GM10248 (cell line): ENCODE measurements at regions of chr7 and their contacts with region 1.

Region 1: DNA sequence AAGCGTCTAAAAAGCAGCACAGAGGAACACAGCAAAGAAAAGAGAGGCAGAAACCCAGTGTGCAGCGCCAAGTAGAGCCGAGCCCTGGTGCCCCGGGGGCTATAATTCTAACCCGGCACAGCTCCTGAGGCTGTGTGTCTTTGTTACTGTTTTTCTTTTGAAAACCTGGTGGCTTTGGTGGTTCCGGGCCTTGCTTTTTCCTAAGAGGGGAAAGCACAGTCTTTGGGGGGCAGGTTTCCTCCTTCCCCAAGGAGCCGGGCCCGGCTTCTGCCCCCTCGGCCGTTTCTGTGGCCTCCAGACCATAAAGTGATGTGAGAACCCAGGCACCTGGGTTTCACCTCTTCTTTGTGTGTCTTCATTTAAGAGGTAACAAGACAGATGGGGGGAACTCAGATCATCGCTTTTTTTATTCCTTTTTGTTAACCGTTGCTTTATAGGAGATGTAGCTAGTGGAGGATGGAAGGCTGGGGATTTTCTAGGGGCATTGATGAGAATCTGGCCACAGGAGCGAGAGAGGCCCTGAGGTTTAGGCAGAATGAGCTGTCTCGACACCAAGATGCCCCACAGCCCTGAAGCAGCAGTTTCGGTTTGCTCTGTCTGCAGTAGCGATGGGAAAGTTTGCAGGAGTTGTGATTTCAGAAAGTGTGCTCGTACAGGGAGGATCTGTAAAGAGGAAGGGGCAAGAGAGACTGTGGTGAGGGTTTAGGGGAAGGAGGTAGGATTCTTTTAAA is 367.8 kb upstream of the GALNT17 start:
- DNase-seq: peak; percentile 75
- CTCF ChIP-seq: no peak

Region 2: GRCh38 chr7:70520611-70521010 is 243.5 kb before region 1 on chr7:
- CTCF ChIA-PET with region 1: no interaction called
- POLR2A ChIA-PET with region 1: no interaction called
- DNase-seq: no peak
- CTCF ChIP-seq: no peak

Region 3: DNA sequence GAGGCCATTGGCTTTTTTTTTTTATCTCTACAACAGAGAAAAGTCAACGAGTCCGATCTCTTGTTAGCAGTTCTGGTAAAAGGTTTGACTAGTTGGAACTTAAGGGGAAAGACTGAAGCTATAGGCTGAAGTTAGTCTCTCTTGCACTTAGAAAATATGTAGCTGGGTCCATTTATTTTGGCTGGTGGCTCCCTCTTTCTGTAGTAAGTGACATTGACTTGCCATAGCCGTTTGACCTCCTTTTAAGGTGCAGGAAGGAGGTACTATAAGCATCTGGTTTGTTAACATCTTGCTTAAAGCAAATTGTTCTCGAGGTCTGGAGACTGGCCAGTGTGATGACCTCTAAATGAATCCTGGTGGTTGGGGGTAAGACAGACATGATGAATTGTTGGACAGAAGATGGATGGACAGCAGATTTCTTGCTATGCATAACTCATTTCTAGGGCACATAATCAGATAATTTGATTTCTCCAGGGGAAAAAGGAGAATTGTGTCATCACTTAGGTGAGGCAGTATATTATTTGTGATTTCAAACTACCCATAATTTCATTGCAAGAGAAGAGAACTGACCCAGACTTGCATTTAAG is 11.5 kb after region 1 on chr7:
- CTCF ChIA-PET with region 1: interaction called, 13 read pairs
- POLR2A ChIA-PET with region 1: no interaction called
- DNase-seq: no peak
- CTCF ChIP-seq: peak; percentile 50